ENCODE measurements at regions of chr5 and their contacts with region 1.

Region 1: DNA sequence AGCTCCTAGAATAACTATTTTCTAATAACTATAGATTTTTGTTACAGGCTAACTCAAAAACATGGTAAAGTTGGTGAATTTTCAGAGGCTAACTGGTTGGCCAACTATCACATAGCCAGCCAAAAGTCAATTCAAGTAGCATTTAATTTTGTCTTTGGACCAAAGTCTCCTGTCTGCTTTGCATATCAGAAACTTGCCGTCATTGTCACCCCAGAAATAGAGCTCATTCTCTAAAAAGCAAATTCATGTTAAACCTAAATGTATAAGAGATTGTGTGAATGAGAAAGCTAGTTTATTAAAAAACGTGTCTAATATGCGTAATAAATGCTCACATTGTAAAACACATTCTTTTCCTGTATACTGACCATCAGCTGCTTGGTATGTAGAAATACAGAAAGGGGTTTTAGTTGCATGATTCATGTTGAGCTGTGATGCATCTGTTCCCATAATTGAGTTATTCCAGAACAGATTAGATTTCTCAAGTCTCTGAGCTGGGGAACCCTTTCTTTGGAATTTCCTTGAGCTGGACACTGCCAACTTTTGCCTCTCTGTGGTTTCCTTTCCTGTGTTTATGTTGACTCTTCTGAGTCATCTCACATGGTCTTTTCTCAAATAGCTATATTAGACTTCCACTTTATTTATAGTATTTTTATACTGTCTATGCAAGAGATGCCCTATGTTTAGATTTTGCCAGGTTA is 7.3 kb downstream of the SRFBP1 start:
- DNase-seq: no peak
- ATAC-seq: peak; percentile 88 to 94
- H3K4me3 ChIP-seq: no peak overlapping the region
- H3K27ac ChIP-seq: no peak overlapping the region
- H3K4me1 ChIP-seq: no peaks in the 10 kb centered on the region
- H3K27me3 ChIP-seq: no peaks in the 10 kb centered on the region

Region 2: DNA sequence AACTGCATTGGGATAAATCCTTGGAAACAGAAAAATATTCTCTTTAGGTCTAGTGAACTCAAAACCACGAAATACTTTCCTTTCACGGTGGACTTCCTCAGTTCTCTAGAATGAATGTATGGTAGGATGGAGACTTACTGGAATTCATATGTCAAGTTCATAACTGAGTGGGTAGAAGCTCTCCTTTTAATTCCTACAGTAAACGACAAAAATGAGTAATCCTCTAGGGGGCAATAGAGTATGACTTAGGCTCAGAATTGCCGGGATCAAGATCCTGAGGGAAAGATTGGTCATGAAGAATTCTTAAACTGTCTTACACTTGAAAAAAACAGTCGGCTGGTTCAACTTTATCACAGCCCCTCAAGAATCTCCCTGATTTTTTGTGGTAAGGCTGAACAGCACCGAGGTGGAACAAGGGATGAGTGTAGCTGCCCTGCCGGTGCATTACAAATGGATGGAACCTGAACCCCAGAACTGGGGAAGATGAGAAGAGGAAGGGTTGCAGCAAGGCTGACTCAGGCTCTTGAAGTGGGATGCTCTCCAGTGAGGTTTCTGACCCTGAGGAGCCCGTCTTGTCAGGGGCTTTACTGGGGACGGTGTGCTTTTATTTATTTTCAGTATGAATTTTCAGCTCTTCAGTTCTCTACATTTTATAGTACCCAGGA is 123.0 kb after region 1 on chr5:
- intact Hi-C with region 1: loop called in 2 of 4 experiments (anchors 10 kb)
- DNase-seq: no peak
- ATAC-seq: no peak
- H3K4me3 ChIP-seq: no peak overlapping the region
- H3K27ac ChIP-seq: no peak overlapping the region
- H3K4me1 ChIP-seq: no peaks in the 10 kb centered on the region
- H3K27me3 ChIP-seq: no peaks in the 10 kb centered on the region

Region 3: GRCh38 chr5:122101636-122102285 is 132.7 kb after region 1 on chr5:
- intact Hi-C with region 1: loop called in 3 of 4 experiments (anchors 10 kb)
- DNase-seq: no peak
- ATAC-seq: peak; percentile 31 to 51
- H3K4me3 ChIP-seq: no peak overlapping the region
- H3K27ac ChIP-seq: no peak overlapping the region
- H3K4me1 ChIP-seq: no peaks in the 10 kb centered on the region
- H3K27me3 ChIP-seq: no peaks in the 10 kb centered on the region

Region 4: DNA sequence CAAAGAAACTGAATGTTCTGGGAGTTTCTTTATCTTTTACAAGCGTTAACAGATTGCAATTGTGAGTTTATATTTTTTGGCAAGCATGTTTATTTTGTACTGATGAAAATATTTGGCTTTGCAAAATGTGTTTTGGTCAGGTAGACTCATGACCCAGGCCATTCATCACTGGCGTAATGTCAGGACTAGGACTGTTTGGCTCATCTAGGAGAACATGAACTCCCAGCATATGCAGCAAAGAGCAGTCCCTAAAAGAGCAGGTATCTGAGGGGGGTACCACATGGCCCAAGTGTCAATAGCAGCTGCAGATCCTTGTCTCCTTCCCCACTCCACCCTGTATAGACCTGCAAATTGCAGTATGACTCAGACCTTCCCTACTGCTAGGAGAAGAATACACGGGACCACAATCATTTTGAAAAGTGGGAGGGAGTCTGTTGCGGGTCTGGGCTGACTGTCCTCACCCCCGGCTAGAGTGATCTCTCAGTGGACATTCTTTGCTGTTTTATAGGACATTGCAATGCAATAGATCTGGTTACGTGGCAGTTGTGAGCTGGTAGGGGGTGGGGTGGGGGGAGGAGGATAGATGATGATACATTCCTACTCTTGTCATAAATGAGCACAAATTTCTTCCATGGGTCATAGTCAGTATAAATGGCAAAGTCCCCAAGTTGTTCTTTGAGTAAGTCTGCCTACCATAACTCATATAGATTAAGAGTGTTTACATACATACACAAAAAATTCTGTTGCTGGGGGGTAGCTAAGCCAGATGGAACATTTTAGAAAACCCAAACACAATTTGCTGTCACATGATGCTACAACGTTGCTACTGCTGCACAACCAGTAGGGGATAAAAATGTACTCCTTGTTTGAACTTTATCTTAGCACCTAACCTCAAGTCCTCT is 322.2 kb after region 1 on chr5:
- intact Hi-C with region 1: no loop called
- DNase-seq: no peak
- ATAC-seq: no peak
- H3K4me3 ChIP-seq: no peak overlapping the region
- H3K27ac ChIP-seq: no peak overlapping the region
- H3K4me1 ChIP-seq: no peaks in the 10 kb centered on the region
- H3K27me3 ChIP-seq: no peaks in the 10 kb centered on the region